Activated CD4-positive, alpha-beta T cell treated with anti-CD3 and anti-CD28 coated beads, Interleukin-2, amount 10 ng/mL, durations not matched to agents 7 days and 5 days (primary cell): ENCODE measurements at regions of chr6 and their contacts with region 1.

Region 1: GRCh38 chr6:111418971-111419693 is 63.9 kb downstream of the REV3L start:
- DNase-seq: no peak
- H3K4me3 Mint-ChIP-seq: no peak overlapping the region
- H3K27ac Mint-ChIP-seq: no peak overlapping the region
- H3K4me1 Mint-ChIP-seq: peaks cover 9% of the 10 kb centered on the region
- H3K27me3 Mint-ChIP-seq: no peaks in the 10 kb centered on the region

Region 2: DNA sequence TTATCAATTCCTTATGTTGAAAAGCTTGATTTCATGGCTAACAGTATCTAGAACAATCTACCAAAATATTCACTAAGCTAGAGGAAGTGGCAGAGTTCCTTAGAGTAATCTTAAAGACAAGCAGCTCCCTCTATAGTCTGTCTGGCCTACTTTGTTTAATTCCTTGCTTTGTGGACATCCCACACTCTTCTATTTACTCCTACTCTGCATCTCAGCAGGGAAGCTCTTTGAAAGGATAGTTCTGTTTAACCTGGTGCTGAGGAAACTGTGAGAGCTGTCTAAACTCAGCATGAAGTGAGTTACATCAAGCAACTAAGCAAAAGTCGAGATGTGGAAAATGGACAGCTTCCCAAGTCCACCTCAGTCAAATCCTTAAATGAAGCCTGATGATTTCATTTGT is 59.6 kb after region 1 on chr6:
- CTCF ChIA-PET with region 1: no interaction called
- POLR2A ChIA-PET with region 1: interaction called, 11 read pairs
- DNase-seq: no peak
- H3K4me3 Mint-ChIP-seq: no peak overlapping the region
- H3K27ac Mint-ChIP-seq: no peak overlapping the region
- H3K4me1 Mint-ChIP-seq: peaks cover 38% of the 10 kb centered on the region
- H3K27me3 Mint-ChIP-seq: no peaks in the 10 kb centered on the region

Region 3: DNA sequence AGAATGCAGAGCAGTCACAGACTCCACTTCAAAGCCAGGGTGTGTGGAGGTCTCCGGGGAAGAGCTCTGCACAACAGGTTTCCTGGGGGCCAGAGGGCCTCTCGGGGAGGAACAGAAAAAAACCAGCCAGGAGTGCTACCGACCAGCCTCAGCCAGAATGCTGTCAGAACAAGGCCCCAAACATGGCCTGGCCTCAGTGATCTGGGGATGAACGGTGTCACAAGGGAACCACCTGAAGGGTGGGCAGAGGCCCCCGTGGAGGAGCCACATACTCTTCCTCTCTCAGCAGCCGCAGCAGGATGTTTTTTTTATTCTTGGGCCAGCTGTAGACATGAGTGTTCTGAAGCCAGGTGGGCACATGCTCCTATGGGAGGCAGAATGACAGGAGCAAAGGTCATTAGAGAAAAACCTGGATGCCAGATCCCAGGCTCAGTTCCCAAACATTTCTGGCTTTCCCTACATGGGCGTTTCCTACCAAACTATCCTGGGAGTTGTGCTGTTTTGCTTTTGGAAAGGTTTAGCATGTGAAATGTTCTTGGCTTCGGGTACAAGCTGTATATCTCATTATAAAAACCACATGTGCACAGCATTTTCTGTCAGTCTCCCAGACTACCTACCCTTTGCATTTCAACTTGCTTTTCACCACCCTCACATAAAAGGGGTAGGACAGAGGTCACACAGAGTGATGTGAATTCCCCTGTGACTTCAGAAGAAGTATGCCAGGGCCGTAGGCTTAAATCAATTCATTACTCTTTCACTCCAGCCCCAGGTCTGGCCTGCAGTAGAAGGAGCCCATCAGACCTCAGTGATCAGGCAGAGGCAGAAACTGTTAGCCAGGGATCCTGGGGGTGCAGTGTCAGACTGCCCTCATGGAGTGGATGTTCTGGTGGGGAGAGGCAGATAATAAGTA is 140.3 kb after region 1 on chr6:
- CTCF ChIA-PET with region 1: no interaction called
- POLR2A ChIA-PET with region 1: no interaction called
- DNase-seq: no peak
- H3K4me3 Mint-ChIP-seq: no peak overlapping the region
- H3K27ac Mint-ChIP-seq: peak overlapping the region; percentile 80
- H3K4me1 Mint-ChIP-seq: peaks cover 29% of the 10 kb centered on the region
- H3K27me3 Mint-ChIP-seq: no peaks in the 10 kb centered on the region

Region 4: DNA sequence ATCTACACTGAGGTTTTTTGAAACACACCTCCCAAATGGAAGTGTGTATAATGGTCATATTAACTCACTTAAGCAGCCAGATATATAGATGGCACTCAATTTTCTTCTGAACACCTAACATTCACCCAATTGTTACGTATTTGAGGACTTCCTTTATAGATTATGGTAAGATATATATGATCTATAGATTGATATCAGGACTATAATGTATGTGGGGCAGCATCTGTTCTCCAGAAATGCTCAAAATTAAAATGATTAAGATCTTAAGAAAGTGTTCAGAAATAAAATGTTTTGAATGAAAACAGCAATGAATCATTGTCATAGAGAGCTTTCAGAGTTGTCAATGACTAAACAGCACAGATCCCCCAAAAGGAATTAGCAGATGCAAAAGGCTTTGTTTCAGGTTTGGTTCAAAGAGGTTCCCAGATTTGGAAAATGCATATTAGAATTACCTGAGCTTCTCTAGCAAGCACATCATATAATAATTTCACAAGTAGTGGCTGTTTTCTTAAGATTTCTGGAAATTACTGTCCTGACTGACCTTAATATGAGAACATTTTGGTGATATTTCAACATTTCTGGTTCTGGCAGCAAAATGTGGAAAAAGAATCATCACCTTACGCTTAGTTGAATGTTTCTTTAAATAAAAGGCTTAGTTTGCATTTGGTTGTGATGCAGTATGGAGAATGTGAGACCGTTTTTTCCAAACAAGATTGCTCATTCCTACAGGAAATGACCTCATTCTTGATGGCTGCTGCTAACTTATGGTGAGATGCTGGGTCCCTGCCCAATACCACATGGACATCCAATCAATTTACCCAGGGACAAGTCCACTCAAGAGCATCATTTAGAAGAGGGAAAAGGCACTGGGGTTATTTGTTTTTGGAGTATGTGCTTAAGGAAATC is 155.0 kb after region 1 on chr6:
- CTCF ChIA-PET with region 1: no interaction called
- POLR2A ChIA-PET with region 1: no interaction called
- DNase-seq: no peak
- H3K4me3 Mint-ChIP-seq: no peak overlapping the region
- H3K27ac Mint-ChIP-seq: no peak overlapping the region
- H3K4me1 Mint-ChIP-seq: peaks cover 14% of the 10 kb centered on the region
- H3K27me3 Mint-ChIP-seq: no peaks in the 10 kb centered on the region